Posterior vena cava (tissue), 2 donors: ENCODE measurements at regions of chr10 and their contacts with region 1.

Region 1: GRCh38 chr10:25405871-25406270 is 231.1 kb downstream of the GPR158 start:
- DNase-seq: no peak

Region 2: GRCh38 chr10:24449321-24449740 is 956.5 kb before region 1 on chr10:
- intact Hi-C with region 1: no loop called
- DNase-seq: no peak

Region 3: GRCh38 chr10:24625778-24626177 is 780.1 kb before region 1 on chr10:
- intact Hi-C with region 1: loop called in 1 of 2 experiments (anchors 5 kb)
- DNase-seq: no peak